ENCODE measurements at regions of chr19 and their contacts with region 1.

Region 1: DNA sequence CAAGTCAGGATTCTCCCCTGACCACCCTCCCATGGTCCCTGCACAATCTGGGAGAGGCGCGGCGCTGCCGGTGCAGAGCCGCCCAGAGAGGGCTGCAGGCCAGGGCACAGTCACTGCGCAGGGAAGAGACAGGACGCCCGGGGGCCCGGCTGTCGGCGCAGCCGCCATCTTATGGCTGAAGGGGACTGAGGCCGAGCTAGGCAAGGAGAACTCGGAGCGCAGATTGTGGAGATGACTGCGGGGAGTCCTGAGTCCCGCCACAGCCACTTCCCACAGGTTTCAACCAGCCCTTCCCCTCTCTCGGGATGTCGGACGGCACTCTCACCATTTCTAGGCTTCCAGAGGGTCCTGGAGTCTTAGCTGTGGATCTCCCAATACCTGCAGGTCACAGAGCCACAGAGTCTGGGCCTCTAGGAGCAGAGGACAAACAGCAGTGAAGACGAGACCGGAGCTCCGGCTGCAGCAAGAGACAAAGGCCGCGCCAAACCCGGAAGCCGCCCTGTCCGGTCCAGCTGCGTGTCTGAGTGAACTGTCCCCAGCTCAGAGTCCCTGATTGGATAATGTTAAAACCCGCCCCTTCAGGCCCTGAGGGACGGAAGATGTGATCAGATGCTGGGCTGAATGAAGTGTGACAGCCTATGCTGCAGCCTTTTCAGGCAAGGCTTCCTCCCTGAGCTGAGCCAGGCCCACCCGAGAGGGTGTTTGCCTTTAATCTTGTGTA is at the start of gene ZNF708:
- DNase-seq: peak; percentile 90
- ATAC-seq: peak; percentile 100
- H3K4me3 ChIP-seq: peak within 1 kb of the TSS; percentile 86
- H3K27ac ChIP-seq: peak within 1 kb of the TSS; percentile 94
- H3K4me1 ChIP-seq: peaks cover 2% of the 10 kb centered on the region; the same call in 1 of the 2 replicates
- H3K27me3 ChIP-seq: no peaks in the 10 kb centered on the region
- CTCF ChIP-seq: no peak
- POLR2A ChIP-seq: peak; percentile 88
- RAD21 ChIP-seq: no peak
- total RNA-seq, gene ZNF708: 4.7 and 7.2 TPM in 2 replicates

Region 2: DNA sequence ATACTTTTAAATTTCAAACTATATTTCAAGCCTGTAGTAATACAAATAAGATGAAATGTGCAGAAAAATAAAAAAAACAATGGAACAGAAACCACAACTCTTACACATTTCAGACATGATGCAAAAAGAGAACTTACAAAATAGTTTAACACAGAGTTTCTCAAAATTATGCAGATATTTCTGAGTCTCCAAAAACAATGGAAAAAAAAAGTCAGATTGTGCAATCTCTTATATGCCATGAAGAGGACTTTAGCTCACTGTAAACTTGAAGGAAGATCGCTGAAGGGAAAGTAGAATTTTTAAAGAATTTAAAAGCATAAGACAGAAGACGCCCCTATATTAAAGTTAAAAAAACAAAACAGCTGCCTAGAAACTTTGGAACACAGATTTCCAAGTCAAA is 20.3 kb before region 1 on chr19:
- CTCF ChIA-PET with region 1: no interaction called
- POLR2A ChIA-PET with region 1: no interaction called
- dilution Hi-C with region 1: no loop called
- in situ Hi-C with region 1: no loop called
- intact Hi-C with region 1: no loop called
- DNase-seq: no peak
- ATAC-seq: no peak
- H3K4me3 ChIP-seq: no peak overlapping the region
- H3K27ac ChIP-seq: no peak overlapping the region
- H3K4me1 ChIP-seq: no peaks in the 10 kb centered on the region
- H3K27me3 ChIP-seq: no peaks in the 10 kb centered on the region
- CTCF ChIP-seq: no peak
- POLR2A ChIP-seq: no peak
- RAD21 ChIP-seq: no peak

Region 3: GRCh38 chr19:21358768-21359451 is 29.9 kb after region 1 on chr19 and contains the start of gene ZNF738:
- CTCF ChIA-PET with region 1: no interaction called
- POLR2A ChIA-PET with region 1: interaction called, 4 read pairs
- dilution Hi-C with region 1: no loop called
- in situ Hi-C with region 1: no loop called
- intact Hi-C with region 1: loop called (anchors 1 kb)
- DNase-seq: peak; percentile 96
- ATAC-seq: peak; percentile 99
- H3K4me3 ChIP-seq: peak within 1 kb of the TSS; percentile 85
- H3K27ac ChIP-seq: peak within 1 kb of the TSS; percentile 68
- H3K4me1 ChIP-seq: no peaks in the 10 kb centered on the region
- H3K27me3 ChIP-seq: no peaks in the 10 kb centered on the region
- CTCF ChIP-seq: no peak
- POLR2A ChIP-seq: peak; percentile 55; the same call in 1 of the 2 replicates
- RAD21 ChIP-seq: no peak
- total RNA-seq, gene ZNF738: 2.7 and 4.4 TPM in 2 replicates